ENCODE measurements at regions of chr22 and their contacts with region 1.

Region 1: DNA sequence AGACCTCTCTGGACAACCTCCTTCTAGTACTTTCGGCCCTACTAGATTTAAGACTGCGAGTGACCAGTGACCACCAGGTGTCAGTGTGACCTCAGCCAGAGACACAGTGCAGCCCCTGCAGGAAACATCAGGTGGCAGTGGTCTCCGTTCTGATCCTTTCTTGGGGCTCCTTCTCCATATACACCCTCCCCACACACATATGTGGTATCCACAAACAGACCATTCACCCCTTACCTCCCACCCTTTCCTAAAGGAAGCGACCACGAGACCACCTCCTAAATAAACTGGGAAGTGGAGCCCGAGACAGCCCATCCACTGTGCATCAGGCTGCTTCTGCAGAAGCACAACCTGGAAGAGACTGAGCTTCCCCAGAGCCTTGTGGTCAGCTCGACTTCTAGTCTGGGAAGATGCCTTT is 38.5 kb upstream of the CYP2D6 start:
- DNase-seq: peak in 1 of 2 donors; percentile 43
- ATAC-seq: peak in 1 of 2 donors; percentile 55
- H3K4me3 ChIP-seq: no peak overlapping the region
- H3K27ac ChIP-seq: no peak overlapping the region
- H3K4me1 ChIP-seq: peaks cover 5 to 6% of the 10 kb centered on the region in 2 donors
- H3K27me3 ChIP-seq: no peaks in the 10 kb centered on the region
- CTCF ChIP-seq: peak; percentile 71 to 77 (median 75)
- POLR2A ChIP-seq: no peak

Region 2: GRCh38 chr22:42061041-42061440 is 108.0 kb before region 1 on chr22:
- in situ Hi-C with region 1: no loop called
- intact Hi-C with region 1: no loop called
- DNase-seq: no peak
- ATAC-seq: no peak
- H3K4me3 ChIP-seq: no peak overlapping the region
- H3K27ac ChIP-seq: no peak overlapping the region
- H3K4me1 ChIP-seq: no peaks in the 10 kb centered on the region
- H3K27me3 ChIP-seq: no peaks in the 10 kb centered on the region
- CTCF ChIP-seq: no peak
- POLR2A ChIP-seq: no peak

Region 3: DNA sequence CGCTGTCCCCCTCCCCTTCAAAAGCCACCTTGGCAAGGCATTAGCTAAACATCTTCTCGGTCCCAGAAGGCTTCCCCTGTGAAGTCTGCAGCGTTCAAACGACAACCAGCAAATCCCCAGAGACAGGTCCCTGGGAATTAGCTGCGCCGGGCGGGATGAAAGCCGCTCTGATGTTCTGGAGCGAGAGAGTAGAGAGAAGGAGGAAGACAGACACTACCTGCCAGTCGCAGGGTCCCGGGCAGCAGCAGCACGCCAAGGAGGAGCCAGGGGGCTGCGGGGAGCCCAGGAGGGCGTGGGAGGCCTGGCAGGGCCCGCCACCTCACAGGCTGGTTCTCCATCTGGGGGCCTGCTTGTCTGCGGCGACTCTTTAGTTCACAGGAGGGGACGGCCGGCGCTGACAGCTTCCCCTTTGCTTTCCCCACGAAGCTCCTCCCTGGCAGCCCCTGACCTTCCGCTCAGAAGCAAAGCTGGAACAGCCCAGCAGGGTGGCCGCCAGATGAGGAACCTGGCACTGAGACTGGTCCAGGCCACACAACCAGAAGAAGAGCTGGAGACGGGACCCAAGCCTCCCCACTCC is 263.0 kb after region 1 on chr22 and contains the start of gene NFAM1:
- in situ Hi-C with region 1: loop called in 3 of 4 experiments (anchors 5 to 25 kb)
- intact Hi-C with region 1: loop called (anchors 1 kb)
- DNase-seq: peak; percentile 30 to 39
- ATAC-seq: no peak
- H3K4me3 ChIP-seq: peak within 1 kb of the TSS in 2 of 4 donors; percentile 4 to 40
- H3K27ac ChIP-seq: no peak within 1 kb of the TSS
- H3K4me1 ChIP-seq: no peaks in the 10 kb centered on the region
- H3K27me3 ChIP-seq: peaks cover 19 to 36% (median 28%) of the 10 kb centered on the region in 3 donors
- CTCF ChIP-seq: no peak
- POLR2A ChIP-seq: peak in 1 of 2 donors; percentile 47
- total RNA-seq, gene NFAM1: 0.20 to 0.59 (median 0.58) TPM in 3 of 4 donors, not detected in the other

Region 4: DNA sequence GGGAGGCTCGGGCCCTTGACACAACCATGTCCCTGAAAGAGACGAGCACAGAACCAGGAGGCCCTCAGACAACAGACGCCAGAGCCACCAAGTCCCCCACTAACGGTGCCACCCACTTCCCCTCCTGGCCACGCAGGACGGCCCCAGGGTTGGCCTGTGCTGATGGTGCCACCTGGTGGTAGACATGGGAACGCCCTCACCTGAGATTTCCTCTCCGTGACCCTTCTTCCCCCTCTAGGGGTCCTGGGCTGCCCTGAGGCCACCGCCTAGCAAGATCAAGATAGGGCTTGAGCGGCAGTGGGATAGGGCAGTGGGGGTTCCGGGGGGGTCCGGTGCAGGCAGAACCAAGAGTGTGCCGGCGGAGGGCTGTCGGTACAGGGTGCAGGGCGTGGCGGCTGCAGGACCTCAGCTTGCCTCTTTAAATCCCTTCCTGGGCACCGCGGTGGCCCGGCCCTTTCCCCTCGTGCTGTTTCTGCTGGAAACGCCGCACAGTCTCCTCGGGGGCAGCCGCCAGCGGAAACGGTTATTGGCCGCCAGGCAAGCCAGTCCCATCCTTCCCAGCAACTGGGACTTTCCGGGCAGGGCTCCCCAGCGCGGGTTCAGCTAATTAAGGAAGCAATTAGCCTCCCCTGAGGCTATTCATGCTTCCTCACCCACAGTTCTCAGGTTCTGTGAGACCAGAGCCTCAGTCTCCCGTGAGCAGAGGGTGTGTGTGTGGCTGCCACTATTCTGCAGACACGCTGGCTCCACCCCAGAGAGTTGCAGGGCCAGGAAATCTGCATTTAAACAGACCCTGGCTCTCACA is 268.6 kb after region 1 on chr22:
- in situ Hi-C with region 1: loop called (anchors 5 to 25 kb)
- intact Hi-C with region 1: loop called (anchors 1 kb)
- DNase-seq: peak; percentile 40 to 54
- ATAC-seq: peak; percentile 78 to 91
- H3K4me3 ChIP-seq: peak overlapping the region; percentile 21 to 53 (median 38)
- H3K27ac ChIP-seq: no peak overlapping the region
- H3K4me1 ChIP-seq: peaks cover 6 to 7% of the 10 kb centered on the region in 2 donors
- H3K27me3 ChIP-seq: peaks cover 15 to 22% (median 16%) of the 10 kb centered on the region in 3 donors
- CTCF ChIP-seq: peak; percentile 92 to 97 (median 95)
- POLR2A ChIP-seq: no peak

Region 5: GRCh38 chr22:42444077-42444904 is 275.2 kb after region 1 on chr22:
- in situ Hi-C with region 1: loop called in 3 of 4 experiments (anchors 5 to 25 kb)
- intact Hi-C with region 1: no loop called
- DNase-seq: peak; percentile 30 to 67
- ATAC-seq: peak; percentile 70 to 71
- H3K4me3 ChIP-seq: peak overlapping the region in 3 of 4 donors; percentile 34 to 47 (median 40)
- H3K27ac ChIP-seq: peak overlapping the region in 3 of 4 donors; percentile 12 to 32 (median 19)
- H3K4me1 ChIP-seq: peaks cover 9 to 10% of the 10 kb centered on the region in 2 donors
- H3K27me3 ChIP-seq: peaks cover 0 to 18% (median 14%) of the 10 kb centered on the region in 3 donors
- CTCF ChIP-seq: peak in 4 of 5 experiments; percentile 37 to 59 (median 44)
- POLR2A ChIP-seq: no peak

Measured in gastrocnemius medialis (tissue), 4 donors.